Caki2 (cell line): ENCODE measurements at regions of chr1 and their contacts with region 1.

Region 1: DNA sequence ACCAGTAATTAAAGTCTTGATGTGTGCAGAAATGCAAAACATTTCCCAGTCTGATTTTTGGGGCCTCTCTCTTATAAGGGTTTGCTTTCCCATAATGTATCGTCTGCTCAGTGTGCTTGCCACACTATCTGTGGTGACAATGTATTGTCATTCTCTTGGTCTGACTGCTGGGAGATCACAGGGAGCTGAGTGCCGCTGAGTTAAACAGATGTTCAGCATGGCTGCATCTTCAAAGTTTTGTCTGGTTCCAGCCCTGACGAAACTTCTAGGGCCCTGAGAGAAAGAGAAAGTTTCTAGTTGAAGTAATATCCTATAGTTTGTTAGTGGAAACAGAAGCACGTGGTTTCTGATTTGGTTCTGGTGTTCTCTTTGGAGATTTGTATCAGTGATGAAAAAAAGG is 42.6 kb downstream of the DNM3 start:
- DNase-seq: no peak

Region 2: GRCh38 chr1:171919891-171920887 is 36.3 kb after region 1 on chr1:
- in situ Hi-C with region 1: no loop called
- DNase-seq: no peak

Region 3: GRCh38 chr1:171965777-171966176 is 81.9 kb after region 1 on chr1:
- in situ Hi-C with region 1: loop called (anchors 5 kb)
- DNase-seq: no peak